Prostate gland (tissue), 2 donors: ENCODE measurements at regions of chr12 and their contacts with region 1.

Region 1: DNA sequence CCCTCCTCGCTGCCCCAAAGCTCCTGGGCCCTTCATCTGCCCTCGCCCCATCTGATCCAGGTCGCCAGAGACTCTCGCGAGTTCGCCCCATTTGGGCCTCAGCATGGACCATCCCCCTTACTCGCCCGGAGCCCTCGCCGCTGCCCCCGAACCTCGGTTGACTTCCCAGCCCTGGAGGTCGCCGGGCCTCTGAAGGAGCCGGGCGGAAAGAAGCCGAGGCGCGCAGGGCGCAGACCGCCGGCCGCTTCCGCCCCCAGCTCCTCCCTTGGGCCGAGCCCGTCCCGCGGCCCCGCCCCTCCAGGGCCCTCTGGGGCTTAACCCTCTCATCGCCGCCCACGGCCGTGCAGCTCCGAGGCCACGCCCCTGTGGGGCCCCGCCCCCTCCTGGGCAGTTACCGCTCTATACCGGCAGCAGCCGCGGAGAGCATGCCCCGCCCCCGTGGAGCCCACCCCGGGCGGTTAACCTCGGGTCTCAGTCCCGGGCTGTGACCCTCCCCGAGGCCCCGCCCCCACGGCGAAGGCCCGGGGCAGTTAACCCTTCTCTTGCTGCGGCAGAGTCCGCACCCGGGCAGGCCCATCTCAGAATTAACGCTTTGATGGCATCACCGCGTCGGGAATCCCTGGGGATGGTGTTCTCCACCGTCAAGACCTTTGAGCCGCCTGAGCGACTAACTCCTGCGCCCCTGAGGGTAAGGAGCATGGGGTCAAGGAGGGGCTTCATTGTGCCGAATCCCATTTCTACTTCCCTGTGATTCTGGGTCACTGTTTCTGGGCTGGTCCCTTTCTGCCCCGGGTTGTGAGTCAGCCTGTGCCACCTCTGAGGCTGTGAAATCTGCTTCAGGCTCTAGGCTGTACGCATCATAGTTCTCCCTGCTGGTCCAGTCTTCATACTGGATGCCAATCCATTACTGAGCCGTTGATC is at the start of gene SPSB2:
- DNase-seq: peak; percentile 93
- H3K4me3 ChIP-seq: peak within 1 kb of the TSS; percentile 49 to 71
- H3K27ac ChIP-seq: peak within 1 kb of the TSS; percentile 68 to 75
- H3K4me1 ChIP-seq: peaks cover 13% of the 10 kb centered on the region
- H3K27me3 ChIP-seq: no peaks in the 10 kb centered on the region
- CTCF ChIP-seq: peak in 2 of 4 experiments; percentile 16 to 37
- POLR2A ChIP-seq: peak; percentile 69
- total RNA-seq, gene SPSB2: 12.7 to 23.5 TPM

Region 2: GRCh38 chr12:6708960-6709394 is 164.4 kb before region 1 on chr12:
- intact Hi-C with region 1: no loop called
- DNase-seq: no peak
- H3K4me3 ChIP-seq: no peak overlapping the region
- H3K27ac ChIP-seq: no peak overlapping the region
- H3K4me1 ChIP-seq: no peaks in the 10 kb centered on the region
- H3K27me3 ChIP-seq: no peaks in the 10 kb centered on the region
- CTCF ChIP-seq: no peak
- POLR2A ChIP-seq: no peak

Region 3: DNA sequence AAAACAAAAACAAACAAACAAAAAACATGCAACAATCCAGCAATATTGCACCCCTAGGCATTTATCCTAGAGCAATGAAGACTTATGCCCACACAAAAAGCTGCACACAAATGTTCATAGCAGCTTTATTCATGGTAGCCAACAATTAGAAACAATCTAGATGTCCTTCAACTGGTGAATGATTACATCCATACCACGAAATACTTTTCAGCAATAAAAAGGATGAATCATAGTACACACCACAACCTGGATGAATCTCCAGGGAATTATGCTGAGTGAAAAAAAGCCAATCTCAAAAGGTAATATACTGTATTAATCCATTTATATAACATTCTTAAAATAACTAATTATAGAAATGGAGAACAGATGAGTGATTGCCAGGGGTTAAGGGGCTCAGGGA is 66.2 kb before region 1 on chr12:
- intact Hi-C with region 1: no loop called
- DNase-seq: no peak
- H3K4me3 ChIP-seq: no peak overlapping the region
- H3K27ac ChIP-seq: no peak overlapping the region
- H3K4me1 ChIP-seq: no peaks in the 10 kb centered on the region
- H3K27me3 ChIP-seq: no peaks in the 10 kb centered on the region
- CTCF ChIP-seq: no peak
- POLR2A ChIP-seq: no peak

Region 4: DNA sequence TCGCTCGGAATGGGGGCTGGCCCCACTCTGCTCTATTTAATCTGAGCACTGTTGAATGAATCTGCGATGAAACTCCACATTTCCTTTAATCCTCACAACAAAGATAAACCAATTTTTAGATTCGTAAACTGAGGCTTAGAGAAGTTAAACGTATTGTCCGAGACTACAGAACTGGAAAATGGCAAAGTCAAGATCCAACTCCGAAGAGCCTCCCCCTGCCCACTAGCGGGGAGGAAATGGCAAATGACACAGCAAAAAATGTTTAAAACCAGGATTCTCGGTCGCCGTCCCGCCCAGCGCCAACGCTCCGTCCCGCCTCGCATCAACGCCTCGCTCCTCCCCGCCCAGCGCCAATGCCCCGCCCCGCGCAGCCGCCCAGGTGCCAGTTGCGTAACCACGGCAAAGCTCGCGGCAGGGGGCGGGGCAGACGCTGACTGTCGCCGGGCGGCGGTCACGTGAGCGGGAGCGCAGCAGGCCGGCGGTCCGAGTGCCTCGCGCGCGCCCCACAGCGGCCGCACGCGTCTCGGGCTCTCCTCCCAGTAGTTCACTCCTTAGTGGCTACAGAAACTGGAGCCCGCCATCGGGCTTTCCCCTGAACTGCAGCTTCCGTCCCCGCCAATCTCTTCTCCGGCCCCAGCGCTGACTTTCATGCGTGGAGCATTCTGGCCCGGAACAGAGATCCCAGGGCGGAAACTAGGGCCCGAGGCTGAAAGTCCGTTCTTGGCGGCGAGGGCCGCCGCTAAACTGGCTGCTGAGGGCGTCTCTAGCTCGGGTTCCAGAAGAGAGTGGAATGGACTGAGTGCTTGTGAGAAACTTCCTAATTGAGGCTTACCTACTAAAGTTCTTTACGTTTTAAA is 17.7 kb after region 1 on chr12:
- intact Hi-C with region 1: loop called (anchors 1 kb)
- DNase-seq: peak; percentile 97
- H3K4me3 ChIP-seq: peak overlapping the region; percentile 42 to 47
- H3K27ac ChIP-seq: peak overlapping the region; percentile 89 to 90
- H3K4me1 ChIP-seq: no peaks in the 10 kb centered on the region
- H3K27me3 ChIP-seq: no peaks in the 10 kb centered on the region
- CTCF ChIP-seq: peak; percentile 86 to 99 (median 97)
- POLR2A ChIP-seq: peak; percentile 64

Region 5: DNA sequence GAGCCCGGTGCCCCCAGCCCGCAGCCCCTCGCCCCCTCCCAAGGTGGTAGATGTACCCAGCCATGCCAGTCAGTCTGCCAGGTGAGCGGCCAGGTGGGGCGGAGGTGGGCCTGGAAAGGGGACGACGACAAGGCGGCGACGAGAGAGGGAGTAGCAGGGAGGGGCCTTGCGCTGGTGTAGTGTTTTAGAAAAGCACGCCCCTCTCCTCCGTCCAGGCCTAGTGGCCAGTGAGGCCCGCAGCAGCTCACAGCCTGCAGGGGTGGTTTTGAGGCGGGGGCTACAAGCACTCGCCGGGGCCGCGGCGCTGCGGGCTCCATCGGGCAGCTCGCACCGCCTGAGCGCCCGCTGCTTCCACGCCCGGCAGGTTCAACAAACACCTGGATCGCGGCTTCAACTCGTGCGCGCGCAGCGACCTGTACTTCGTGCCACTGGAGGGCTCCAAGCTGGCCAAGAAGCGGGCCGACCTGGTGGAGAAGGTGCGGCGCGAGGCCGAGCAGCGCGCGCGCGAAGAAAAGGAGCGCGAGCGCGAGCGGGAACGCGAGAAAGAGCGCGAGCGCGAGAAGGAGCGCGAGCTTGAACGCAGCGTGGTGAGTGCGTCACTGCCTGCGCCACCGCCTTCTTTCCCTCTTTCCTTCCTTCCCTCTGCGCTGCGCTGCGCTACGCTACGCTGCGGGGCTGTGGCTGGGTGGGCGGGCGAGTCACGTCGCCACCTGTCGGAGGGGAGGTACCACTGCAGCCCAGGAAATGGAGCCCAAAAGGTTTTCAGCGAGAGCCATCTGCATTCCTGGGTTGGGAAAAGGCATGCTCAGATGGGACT is 64.3 kb after region 1 on chr12:
- intact Hi-C with region 1: loop called (anchors 10 kb)
- DNase-seq: peak; percentile 91
- H3K4me3 ChIP-seq: peak overlapping the region; percentile 47 to 52
- H3K27ac ChIP-seq: peak overlapping the region; percentile 92 to 94
- H3K4me1 ChIP-seq: peaks cover 17% of the 10 kb centered on the region
- H3K27me3 ChIP-seq: no peaks in the 10 kb centered on the region
- CTCF ChIP-seq: peak; percentile 98 to 99 (median 98)
- POLR2A ChIP-seq: peak; percentile 79

Region 6: DNA sequence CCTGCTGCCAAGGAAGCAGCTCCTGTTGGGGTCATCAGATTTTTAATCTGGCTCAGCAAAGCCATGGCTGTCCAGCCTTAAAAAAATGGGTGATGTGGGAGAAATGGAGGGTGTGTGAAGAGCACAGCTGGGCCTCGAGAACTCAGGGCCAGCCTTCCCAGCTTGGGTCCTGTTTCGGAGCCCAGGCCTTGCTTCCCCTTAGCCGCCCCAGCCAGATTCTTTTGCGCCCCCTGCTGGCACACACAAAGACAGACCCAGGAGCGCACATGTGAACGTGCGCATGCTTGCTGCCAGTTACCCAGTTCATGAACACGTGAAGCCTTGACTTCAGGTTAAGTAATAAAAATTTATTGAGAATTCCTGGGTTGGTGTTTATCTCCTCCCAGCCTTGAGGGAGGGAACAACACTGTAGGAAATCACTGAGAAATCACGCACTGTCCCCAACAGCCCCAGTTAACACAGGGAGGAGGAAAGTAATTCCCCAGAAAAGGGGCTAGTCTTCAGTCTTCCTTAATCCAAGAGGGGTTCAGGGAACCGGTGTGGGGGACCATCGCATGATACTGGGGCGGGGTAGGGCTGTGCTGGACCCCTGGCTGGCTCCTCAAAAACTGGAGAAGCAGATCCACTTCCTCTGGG is 91.8 kb after region 1 on chr12:
- intact Hi-C with region 1: loop called (anchors 10 kb)
- DNase-seq: peak; percentile 94
- H3K4me3 ChIP-seq: peak overlapping the region in 1 of 2 donors; percentile 85
- H3K27ac ChIP-seq: peak overlapping the region; percentile 97 to 98
- H3K4me1 ChIP-seq: peaks cover 29% of the 10 kb centered on the region
- H3K27me3 ChIP-seq: no peaks in the 10 kb centered on the region
- CTCF ChIP-seq: peak; percentile 93 to 98 (median 96)
- POLR2A ChIP-seq: peak; percentile 38